A549 (cell line): ENCODE measurements at regions of chr15 and their contacts with region 1.

Region 1: DNA sequence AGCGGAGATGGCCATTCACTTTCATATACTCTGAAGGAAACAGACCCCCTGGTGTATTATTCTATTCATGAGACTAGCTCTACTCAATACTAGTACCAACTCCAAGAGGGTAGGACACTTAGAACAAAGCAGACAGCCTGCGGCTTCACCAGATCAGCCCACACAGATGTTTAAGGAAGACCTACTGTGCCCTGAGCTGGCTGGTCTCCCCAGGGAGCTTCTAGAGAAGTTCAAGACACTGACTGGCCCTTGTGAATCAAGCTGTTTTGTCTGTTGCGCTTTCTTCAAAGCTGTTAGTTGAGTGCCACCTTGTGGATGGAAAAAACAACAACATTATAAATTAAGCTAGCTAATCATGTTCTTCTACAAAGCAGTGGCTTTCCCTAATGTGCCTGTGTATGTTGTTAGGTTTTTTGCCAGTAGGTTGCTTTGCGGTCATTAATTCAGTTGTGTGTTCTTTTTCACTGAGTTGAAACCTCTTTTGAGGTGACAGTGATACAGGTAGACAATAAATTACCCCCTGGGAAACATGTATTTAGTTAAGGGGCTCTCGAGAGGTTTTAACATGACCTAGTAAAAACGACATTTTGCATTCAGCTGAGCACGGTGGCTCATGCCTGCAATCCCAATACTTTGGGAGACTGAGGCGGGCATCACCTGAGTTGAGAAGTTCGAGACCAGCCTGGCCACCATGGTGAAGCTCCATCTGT is 64.2 kb upstream of the MYZAP start:
- DNase-seq: peak; percentile 64 to 89
- ATAC-seq: peak; percentile 80 to 89
- H3K4me3 ChIP-seq: no peak overlapping the region
- H3K27ac ChIP-seq: peak overlapping the region in 1 of 2 experiments; percentile 14; a peak in 1 of 6 replicates
- H3K4me1 ChIP-seq: peaks cover 4% of the 10 kb centered on the region; the same call in 2 of the 3 replicates
- CTCF ChIP-seq: peak; percentile 96
- EP300 ChIP-seq: no peak
- POLR2A ChIP-seq: no peak
- RAD21 ChIP-seq: peak; percentile 98 to 99

Region 2: GRCh38 chr15:57146506-57147201 is 380.9 kb before region 1 on chr15:
- CTCF ChIA-PET with region 1: interaction called, 32 read pairs
- POLR2A ChIA-PET with region 1: no interaction called
- DNase-seq: peak; percentile 14 to 56
- ATAC-seq: peak; percentile 54 to 61; a peak in 2 of 6 replicates
- H3K4me3 ChIP-seq: no peak overlapping the region
- H3K27ac ChIP-seq: no peak overlapping the region
- H3K4me1 ChIP-seq: peaks cover 5% of the 10 kb centered on the region; the same call in 1 of the 3 replicates
- CTCF ChIP-seq: peak; percentile 95
- EP300 ChIP-seq: no peak
- POLR2A ChIP-seq: no peak
- RAD21 ChIP-seq: peak; percentile 88 to 90

Region 3: DNA sequence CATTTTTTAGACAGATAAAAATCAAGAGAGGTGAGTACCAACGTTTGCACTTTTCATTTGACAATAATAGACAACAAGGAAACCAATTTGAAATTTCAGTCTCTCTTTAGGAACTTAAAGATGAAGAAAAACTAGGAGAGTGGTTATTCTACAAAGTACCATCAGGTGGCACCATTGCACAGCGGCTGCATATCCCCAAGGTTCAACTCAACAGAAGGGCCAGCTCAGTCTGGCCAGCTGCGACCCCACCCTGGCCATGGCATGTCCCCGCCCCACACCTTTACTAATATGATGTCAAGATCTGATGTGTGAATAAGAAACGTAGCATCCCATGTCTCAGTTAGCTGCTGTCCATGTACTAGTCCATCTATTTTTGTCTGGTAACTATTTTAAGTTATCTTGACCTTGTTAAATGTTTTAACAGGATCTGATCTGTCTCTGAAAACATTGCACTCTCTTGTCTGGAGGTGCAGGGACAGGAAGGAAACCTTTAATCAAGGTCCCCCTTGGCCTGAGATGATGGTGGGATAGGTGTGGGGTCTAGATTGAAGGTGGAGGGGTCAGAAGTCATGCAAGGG is 186.8 kb before region 1 on chr15:
- CTCF ChIA-PET with region 1: interaction called, 512 read pairs
- POLR2A ChIA-PET with region 1: interaction called, 11 read pairs
- DNase-seq: peak; percentile 50 to 76
- ATAC-seq: peak; percentile 76 to 88; a peak in 5 of 6 replicates
- H3K4me3 ChIP-seq: no peak overlapping the region
- H3K27ac ChIP-seq: no peak overlapping the region
- H3K4me1 ChIP-seq: 0 out of 3 replicates have a peak, but pooled peaks cover 4% of the 10 kb centered on the region
- CTCF ChIP-seq: peak; percentile 99
- EP300 ChIP-seq: no peak
- POLR2A ChIP-seq: no peak
- RAD21 ChIP-seq: peak; percentile 100

Region 4: DNA sequence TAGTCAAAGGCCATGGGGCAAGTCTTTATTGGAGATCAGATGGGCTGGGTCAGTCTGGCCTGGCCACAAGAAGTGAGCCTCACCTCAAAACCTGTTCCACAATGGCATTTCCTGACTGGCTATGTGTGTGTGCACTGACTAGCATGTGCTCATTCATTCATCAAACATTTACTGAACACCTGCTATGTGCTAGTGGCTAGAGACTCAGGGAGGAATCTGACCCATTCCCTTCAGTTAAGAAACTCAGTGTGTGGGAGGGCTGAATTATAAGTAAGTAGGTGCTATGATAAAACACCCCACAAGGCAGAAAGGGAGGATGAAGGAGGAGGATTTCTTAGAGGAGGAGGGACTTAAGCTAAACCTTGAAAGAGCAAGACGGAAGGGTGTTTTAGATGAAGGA is 156.6 kb before region 1 on chr15:
- CTCF ChIA-PET with region 1: interaction called, 50 read pairs
- POLR2A ChIA-PET with region 1: no interaction called
- DNase-seq: no peak
- ATAC-seq: no peak
- H3K4me3 ChIP-seq: no peak overlapping the region
- H3K27ac ChIP-seq: no peak overlapping the region
- H3K4me1 ChIP-seq: no peaks in the 10 kb centered on the region
- CTCF ChIP-seq: no peak
- EP300 ChIP-seq: no peak
- POLR2A ChIP-seq: no peak
- RAD21 ChIP-seq: no peak

Region 5: GRCh38 chr15:57387564-57388076 is 139.9 kb before region 1 on chr15:
- CTCF ChIA-PET with region 1: interaction called, 17 read pairs
- POLR2A ChIA-PET with region 1: interaction called, 3 read pairs
- DNase-seq: no peak
- ATAC-seq: no peak
- H3K4me3 ChIP-seq: no peak overlapping the region
- H3K27ac ChIP-seq: no peak overlapping the region
- H3K4me1 ChIP-seq: peaks cover 16% of the 10 kb centered on the region
- CTCF ChIP-seq: no peak
- EP300 ChIP-seq: no peak
- POLR2A ChIP-seq: no peak
- RAD21 ChIP-seq: no peak

Region 6: GRCh38 chr15:57485869-57486268 is 41.7 kb before region 1 on chr15:
- CTCF ChIA-PET with region 1: interaction called, 15 read pairs
- POLR2A ChIA-PET with region 1: no interaction called
- DNase-seq: peak; percentile 88 to 95
- ATAC-seq: peak; percentile 100
- H3K4me3 ChIP-seq: no peak overlapping the region
- H3K27ac ChIP-seq: peak overlapping the region; percentile 69 to 83
- H3K4me1 ChIP-seq: peaks cover 20% of the 10 kb centered on the region
- CTCF ChIP-seq: no peak
- EP300 ChIP-seq: peak; percentile 32 to 46; a peak in 2 of 5 replicates
- POLR2A ChIP-seq: no peak
- RAD21 ChIP-seq: peak; percentile 13 to 29; a peak in 1 of 5 replicates

Region 7: DNA sequence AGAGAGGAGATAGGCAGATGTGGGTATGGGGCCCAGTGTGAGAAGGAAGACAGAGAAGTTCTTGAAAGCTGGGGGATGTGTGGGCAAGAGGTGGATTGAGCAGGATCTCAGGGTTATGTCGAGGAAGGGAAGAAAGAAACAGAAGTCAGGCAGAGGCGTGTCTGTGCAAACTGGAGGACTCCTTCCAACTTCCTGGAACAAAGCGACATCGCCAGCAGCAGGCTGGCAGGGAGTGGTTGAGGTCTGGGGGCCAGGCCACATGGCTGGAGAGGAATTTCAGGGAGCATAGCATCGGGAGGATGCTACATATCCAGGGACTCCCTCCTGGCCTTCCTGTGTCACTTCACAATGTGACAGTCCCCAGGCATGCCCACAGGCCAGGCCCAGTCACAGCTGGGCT is 21.3 kb after region 1 on chr15:
- CTCF ChIA-PET with region 1: interaction called, 178 read pairs
- POLR2A ChIA-PET with region 1: no interaction called
- DNase-seq: no peak
- ATAC-seq: no peak
- H3K4me3 ChIP-seq: no peak overlapping the region
- H3K27ac ChIP-seq: peak overlapping the region in 1 of 2 experiments; percentile 55; a peak in 1 of 6 replicates
- H3K4me1 ChIP-seq: peaks cover 35% of the 10 kb centered on the region
- CTCF ChIP-seq: no peak
- EP300 ChIP-seq: no peak
- POLR2A ChIP-seq: no peak
- RAD21 ChIP-seq: no peak